ENCODE measurements at regions of chr11 and their contacts with region 1.

Region 1: DNA sequence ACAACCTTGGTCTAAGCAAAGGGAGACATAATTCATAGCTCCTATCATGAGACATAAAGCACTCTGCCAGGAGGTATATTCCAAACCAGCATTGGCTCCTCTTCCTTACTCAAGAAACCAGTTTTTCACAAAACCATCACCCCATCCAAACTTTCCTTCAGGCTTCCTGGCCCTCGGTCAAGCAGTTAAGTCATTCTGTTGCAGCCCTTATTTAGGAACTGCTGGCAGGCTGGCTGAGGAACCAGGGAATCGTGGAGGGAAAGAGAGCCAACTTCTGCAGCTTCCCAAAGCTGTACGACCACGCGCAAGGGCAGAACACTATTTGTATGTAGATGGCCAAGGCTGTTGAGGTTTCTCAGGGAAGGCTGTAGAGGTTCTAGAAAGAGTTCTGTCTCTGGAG is 680 bp downstream of the IFT46 start:
- DNase-seq: no peak
- ATAC-seq: no peak
- H3K4me3 ChIP-seq: no peak overlapping the region
- H3K27ac ChIP-seq: no peak overlapping the region
- H3K4me1 ChIP-seq: peaks cover 0 to 5% of the 10 kb centered on the region in 2 experiments
- H3K27me3 ChIP-seq: no peaks in the 10 kb centered on the region
- CTCF ChIP-seq: no peak
- EP300 ChIP-seq: no peak
- POLR2A ChIP-seq: no peak
- RAD21 ChIP-seq: no peak

Region 2: DNA sequence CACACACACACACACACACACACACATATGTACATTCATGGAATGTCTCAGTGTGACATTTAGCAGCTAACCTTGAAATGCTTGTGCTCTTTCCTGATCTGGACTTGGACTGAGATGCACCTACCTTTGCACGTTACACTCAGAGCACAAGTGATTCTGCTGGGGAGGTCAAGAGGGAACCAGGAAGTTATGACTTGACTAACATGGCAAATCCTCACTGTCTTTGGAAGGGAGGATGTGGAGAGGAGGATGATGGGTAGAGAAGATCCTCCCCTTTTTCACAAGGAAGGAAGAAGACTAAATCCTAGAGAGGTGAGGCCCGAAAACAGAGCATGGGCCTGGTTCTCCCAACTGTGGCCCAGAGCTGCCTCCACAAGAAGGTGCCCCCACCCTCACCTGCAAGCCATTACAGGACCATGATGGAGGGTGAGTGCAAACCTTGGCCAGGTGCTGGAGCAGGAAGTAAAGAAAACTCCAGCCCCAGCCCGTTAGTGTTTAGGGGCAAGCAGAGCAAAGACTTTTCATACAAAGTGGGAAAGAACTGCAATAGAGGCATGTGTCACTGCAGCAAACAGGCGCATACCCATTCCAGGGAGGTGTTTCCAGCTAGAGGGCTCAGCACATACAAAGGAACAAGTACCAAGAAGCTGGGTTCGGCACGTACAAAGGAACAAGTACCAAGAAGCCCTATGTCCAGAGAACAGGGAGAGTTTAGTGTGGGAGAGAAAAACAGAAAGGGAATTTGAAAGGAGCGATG is 438.8 kb before region 1 on chr11:
- CTCF ChIA-PET with region 1: no interaction called
- POLR2A ChIA-PET with region 1: no interaction called
- in situ Hi-C with region 1: no loop called
- intact Hi-C with region 1: no loop called
- DNase-seq: peak in 1 of 4 experiments; percentile 27
- ATAC-seq: peak; percentile 78
- H3K4me3 ChIP-seq: no peak overlapping the region
- H3K27ac ChIP-seq: peak overlapping the region; percentile 58; the same call in 2 of the 3 replicates
- H3K4me1 ChIP-seq: no peaks in the 10 kb centered on the region
- H3K27me3 ChIP-seq: no peaks in the 10 kb centered on the region
- CTCF ChIP-seq: no peak
- EP300 ChIP-seq: no peak
- POLR2A ChIP-seq: peak; percentile 90
- RAD21 ChIP-seq: no peak

Region 3: DNA sequence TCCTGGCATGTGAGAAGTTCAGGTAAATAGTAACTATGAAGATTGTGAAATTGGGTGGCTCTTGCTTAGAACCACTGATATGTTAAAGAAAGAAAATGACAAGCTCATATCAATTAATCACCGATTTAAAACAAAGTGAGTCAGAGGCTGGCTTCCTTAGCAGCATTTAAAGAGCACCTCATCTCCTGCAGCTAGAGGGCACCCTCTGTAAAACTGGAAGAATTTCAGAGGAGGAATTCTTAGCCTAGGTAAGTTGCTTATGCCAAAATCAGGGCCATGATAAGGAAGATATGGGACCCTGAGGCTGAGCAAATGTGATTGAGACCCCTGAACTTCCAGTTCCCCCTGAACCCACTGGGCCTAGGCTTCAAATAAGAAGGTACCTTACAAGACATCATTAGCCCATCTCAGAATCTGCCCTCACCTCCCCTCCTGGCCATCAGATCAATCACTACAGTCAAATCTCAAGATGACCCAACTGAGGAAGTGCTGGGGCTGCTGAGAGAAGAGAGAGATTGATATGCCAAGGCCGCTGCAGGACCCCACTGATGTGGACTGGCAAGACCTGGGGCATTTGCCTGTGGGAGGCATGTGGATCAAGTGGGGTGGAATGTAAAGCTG is 269.1 kb before region 1 on chr11:
- CTCF ChIA-PET with region 1: no interaction called
- POLR2A ChIA-PET with region 1: no interaction called
- in situ Hi-C with region 1: no loop called
- intact Hi-C with region 1: loop called (anchors 5 kb)
- DNase-seq: peak in 2 of 4 experiments; percentile 32 to 50
- ATAC-seq: peak; percentile 77
- H3K4me3 ChIP-seq: no peak overlapping the region
- H3K27ac ChIP-seq: no peak overlapping the region
- H3K4me1 ChIP-seq: no peaks in the 10 kb centered on the region; a peak in 1 of 5 replicates
- H3K27me3 ChIP-seq: peaks cover 4 to 10% of the 10 kb centered on the region in 2 experiments; a peak in 2 of 5 replicates
- CTCF ChIP-seq: peak; percentile 57 to 81 (median 61); a peak in 5 of 6 replicates
- EP300 ChIP-seq: no peak
- POLR2A ChIP-seq: no peak
- RAD21 ChIP-seq: peak; percentile 70 to 85

Region 4: DNA sequence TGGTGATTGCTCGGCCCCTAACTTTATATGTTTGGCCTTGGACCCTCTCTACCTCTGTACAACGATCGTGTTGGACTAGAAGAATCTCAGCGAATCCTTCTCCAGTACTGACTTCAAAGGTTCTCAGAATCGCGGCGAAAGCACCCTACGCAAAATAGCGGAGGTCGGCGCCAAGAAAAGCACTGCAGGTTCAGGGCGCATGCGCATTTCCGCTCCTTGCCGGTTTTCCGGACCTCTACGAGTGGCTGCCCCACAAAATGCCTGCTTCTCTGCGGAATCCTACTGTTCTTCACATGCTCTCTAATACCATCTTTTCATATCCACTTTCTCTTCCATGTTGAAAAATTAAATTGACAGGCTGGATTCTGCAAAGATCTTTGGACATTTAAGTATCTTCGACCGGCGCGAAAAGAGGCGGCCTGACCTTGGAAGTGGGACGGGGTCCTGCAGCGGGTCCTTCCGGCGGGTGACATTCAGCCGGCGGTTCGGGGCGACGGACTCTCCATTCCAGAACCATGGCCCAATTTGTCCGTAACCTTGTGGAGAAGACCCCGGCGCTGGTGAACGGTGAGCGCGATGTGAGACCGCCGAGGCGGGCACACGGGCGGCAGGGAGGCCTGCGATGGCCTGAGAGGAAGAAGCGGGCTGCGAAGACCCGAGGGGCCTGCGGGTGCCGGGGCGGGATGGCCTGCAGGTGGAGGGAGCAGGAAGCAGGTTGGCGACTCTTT is 163.7 kb before region 1 on chr11 and contains the start of gene ATP5MG:
- CTCF ChIA-PET with region 1: no interaction called
- POLR2A ChIA-PET with region 1: no interaction called
- in situ Hi-C with region 1: no loop called
- intact Hi-C with region 1: loop called (anchors 10 kb)
- DNase-seq: peak; percentile 90 to 94 (median 91)
- ATAC-seq: peak; percentile 82
- H3K4me3 ChIP-seq: peak within 1 kb of the TSS; percentile 95
- H3K27ac ChIP-seq: peak within 1 kb of the TSS; percentile 96
- H3K4me1 ChIP-seq: peaks cover 15 to 17% of the 10 kb centered on the region in 2 experiments; a peak in 4 of 5 replicates
- H3K27me3 ChIP-seq: no peaks in the 10 kb centered on the region
- CTCF ChIP-seq: peak in 2 of 3 experiments; percentile 1 to 8; a peak in 1 of 6 replicates
- EP300 ChIP-seq: no peak
- POLR2A ChIP-seq: peak; percentile 84
- RAD21 ChIP-seq: no peak; a peak in 1 of 4 replicates
- polyA plus RNA-seq, gene ATP5MG: 1,842 to 2,138 TPM

Region 5: GRCh38 chr11:118514103-118514502 is 50.9 kb before region 1 on chr11:
- CTCF ChIA-PET with region 1: interaction called, 3 read pairs
- POLR2A ChIA-PET with region 1: no interaction called
- in situ Hi-C with region 1: no loop called
- intact Hi-C with region 1: loop called (anchors 10 kb)
- DNase-seq: no peak
- ATAC-seq: no peak
- H3K4me3 ChIP-seq: no peak overlapping the region
- H3K27ac ChIP-seq: no peak overlapping the region
- H3K4me1 ChIP-seq: no peaks in the 10 kb centered on the region
- H3K27me3 ChIP-seq: no peaks in the 10 kb centered on the region
- CTCF ChIP-seq: no peak
- EP300 ChIP-seq: no peak
- POLR2A ChIP-seq: no peak
- RAD21 ChIP-seq: no peak

Region 6: GRCh38 chr11:118530408-118531339 is 34.4 kb before region 1 on chr11 and contains the start of gene TMEM25:
- CTCF ChIA-PET with region 1: no interaction called
- POLR2A ChIA-PET with region 1: no interaction called
- in situ Hi-C with region 1: no loop called
- intact Hi-C with region 1: loop called (anchors 5 kb)
- DNase-seq: peak; percentile 70 to 93 (median 90)
- ATAC-seq: peak; percentile 83
- H3K4me3 ChIP-seq: peak within 1 kb of the TSS; percentile 65
- H3K27ac ChIP-seq: peak within 1 kb of the TSS; percentile 52
- H3K4me1 ChIP-seq: peaks cover 9 to 43% of the 10 kb centered on the region in 2 experiments; a peak in 4 of 5 replicates
- H3K27me3 ChIP-seq: no peaks in the 10 kb centered on the region
- CTCF ChIP-seq: 0 out of 6 replicates have a peak, but pooled peaks of 1 of the 3 experiments have one; percentile 2
- EP300 ChIP-seq: no peak
- POLR2A ChIP-seq: peak; percentile 68
- RAD21 ChIP-seq: no peak; a peak in 1 of 4 replicates
- polyA plus RNA-seq, gene TMEM25: 0.34 to 0.49 TPM

Region 7: GRCh38 chr11:118552341-118552740 is 12.7 kb before region 1 on chr11:
- CTCF ChIA-PET with region 1: no interaction called
- POLR2A ChIA-PET with region 1: no interaction called
- in situ Hi-C with region 1: no loop called
- intact Hi-C with region 1: no loop called
- DNase-seq: no peak
- ATAC-seq: no peak
- H3K4me3 ChIP-seq: no peak overlapping the region
- H3K27ac ChIP-seq: no peak overlapping the region
- H3K4me1 ChIP-seq: no peaks in the 10 kb centered on the region; a peak in 2 of 5 replicates
- H3K27me3 ChIP-seq: no peaks in the 10 kb centered on the region
- CTCF ChIP-seq: no peak
- EP300 ChIP-seq: no peak
- POLR2A ChIP-seq: no peak
- RAD21 ChIP-seq: no peak

Region 8: GRCh38 chr11:118956094-118956846 is 391.2 kb after region 1 on chr11 and contains the start of gene UPK2:
- CTCF ChIA-PET with region 1: no interaction called
- POLR2A ChIA-PET with region 1: no interaction called
- in situ Hi-C with region 1: no loop called
- intact Hi-C with region 1: no loop called
- DNase-seq: peak; percentile 84 to 91 (median 90)
- ATAC-seq: peak; percentile 98
- H3K4me3 ChIP-seq: no peak within 1 kb of the TSS
- H3K27ac ChIP-seq: no peak within 1 kb of the TSS
- H3K4me1 ChIP-seq: peaks cover 0 to 17% of the 10 kb centered on the region in 2 experiments; a peak in 3 of 5 replicates
- H3K27me3 ChIP-seq: peaks cover 12 to 33% of the 10 kb centered on the region in 2 experiments; a peak in 4 of 5 replicates
- CTCF ChIP-seq: peak; percentile 92 to 97 (median 95)
- EP300 ChIP-seq: no peak
- POLR2A ChIP-seq: no peak
- RAD21 ChIP-seq: peak; percentile 89 to 96
- polyA plus RNA-seq, gene UPK2: not detected

Region 9: GRCh38 chr11:119095066-119095880 is 530.2 kb after region 1 on chr11:
- CTCF ChIA-PET with region 1: no interaction called
- POLR2A ChIA-PET with region 1: no interaction called
- in situ Hi-C with region 1: no loop called
- intact Hi-C with region 1: no loop called
- DNase-seq: peak; percentile 96 to 99 (median 98)
- ATAC-seq: peak; percentile 81
- H3K4me3 ChIP-seq: peak overlapping the region; percentile 94
- H3K27ac ChIP-seq: peak overlapping the region; percentile 95
- H3K4me1 ChIP-seq: peaks cover 24 to 28% of the 10 kb centered on the region in 2 experiments; a peak in 4 of 5 replicates
- H3K27me3 ChIP-seq: no peaks in the 10 kb centered on the region; a peak in 1 of 5 replicates
- CTCF ChIP-seq: peak; percentile 19 to 43 (median 42); a peak in 3 of 6 replicates
- EP300 ChIP-seq: no peak
- POLR2A ChIP-seq: peak; percentile 100
- RAD21 ChIP-seq: peak; percentile 25 to 31

Measured in K562 (cell line).